CD4-positive, alpha-beta T cell (primary cell): ENCODE measurements at regions of chr7 and their contacts with region 1.

Region 1: GRCh38 chr7:82729172-82730030 is 285.8 kb upstream of the CACNA2D1 start:
- DNase-seq: peak in 4 of 14 experiments; percentile 4 to 20 (median 14)
- ATAC-seq: no peak
- H3K4me3 ChIP-seq: no peak overlapping the region
- H3K4me3 Mint-ChIP-seq: no peak overlapping the region
- H3K27ac ChIP-seq: no peak overlapping the region
- H3K27ac Mint-ChIP-seq: no peak overlapping the region
- H3K4me1 ChIP-seq: no peaks in the 10 kb centered on the region
- H3K4me1 Mint-ChIP-seq: no peaks in the 10 kb centered on the region
- H3K27me3 ChIP-seq: no peaks in the 10 kb centered on the region
- H3K27me3 Mint-ChIP-seq: no peaks in the 10 kb centered on the region
- CTCF ChIP-seq: peak; percentile 29

Region 2: DNA sequence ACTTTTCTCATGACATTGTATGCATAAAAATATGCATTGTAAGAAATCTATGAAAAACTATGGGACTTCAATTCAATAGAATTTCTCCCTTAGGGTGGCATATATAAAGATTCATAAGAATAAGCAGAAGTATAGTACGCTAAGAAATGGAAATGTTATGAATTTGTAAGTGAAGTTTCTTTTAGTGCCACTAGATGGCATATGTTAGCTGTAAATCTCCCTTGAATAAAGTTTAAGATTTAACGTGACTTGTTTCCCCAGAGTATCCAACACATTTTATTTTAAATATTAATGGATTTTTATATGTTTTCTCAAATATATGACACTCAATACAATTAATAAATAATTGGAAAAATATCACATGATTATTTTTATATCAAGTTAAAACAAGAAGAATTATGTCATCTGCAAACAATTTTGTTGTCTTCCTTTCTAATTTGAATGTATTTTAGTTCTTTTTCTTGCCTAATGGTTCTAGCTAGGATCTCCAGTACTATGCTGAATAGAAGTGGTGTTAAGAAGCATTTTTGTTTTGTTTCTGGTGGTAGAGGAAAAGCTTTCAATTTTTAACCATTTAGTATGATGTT is 1246.7 kb before region 1 on chr7:
- CTCF ChIA-PET with region 1: no interaction called
- POLR2A ChIA-PET with region 1: no interaction called
- intact Hi-C with region 1: loop called in 1 of 2 experiments (anchors 5 kb)
- DNase-seq: peak in 1 of 14 experiments; percentile 17
- ATAC-seq: no peak
- H3K4me3 ChIP-seq: no peak overlapping the region
- H3K4me3 Mint-ChIP-seq: no peak overlapping the region
- H3K27ac ChIP-seq: no peak overlapping the region
- H3K27ac Mint-ChIP-seq: no peak overlapping the region
- H3K4me1 ChIP-seq: no peaks in the 10 kb centered on the region
- H3K4me1 Mint-ChIP-seq: no peaks in the 10 kb centered on the region
- H3K27me3 ChIP-seq: no peaks in the 10 kb centered on the region
- H3K27me3 Mint-ChIP-seq: no peaks in the 10 kb centered on the region
- CTCF ChIP-seq: peak; percentile 73

Region 3: GRCh38 chr7:81499262-81500116 is 1229.9 kb before region 1 on chr7:
- CTCF ChIA-PET with region 1: no interaction called
- POLR2A ChIA-PET with region 1: no interaction called
- intact Hi-C with region 1: loop called in 1 of 2 experiments (anchors 5 kb)
- DNase-seq: peak in 2 of 14 experiments; percentile 24 to 29
- ATAC-seq: no peak
- H3K4me3 ChIP-seq: no peak overlapping the region
- H3K4me3 Mint-ChIP-seq: no peak overlapping the region
- H3K27ac ChIP-seq: no peak overlapping the region
- H3K27ac Mint-ChIP-seq: no peak overlapping the region
- H3K4me1 ChIP-seq: no peaks in the 10 kb centered on the region
- H3K4me1 Mint-ChIP-seq: no peaks in the 10 kb centered on the region
- H3K27me3 ChIP-seq: no peaks in the 10 kb centered on the region
- H3K27me3 Mint-ChIP-seq: no peaks in the 10 kb centered on the region
- CTCF ChIP-seq: no peak

Region 4: DNA sequence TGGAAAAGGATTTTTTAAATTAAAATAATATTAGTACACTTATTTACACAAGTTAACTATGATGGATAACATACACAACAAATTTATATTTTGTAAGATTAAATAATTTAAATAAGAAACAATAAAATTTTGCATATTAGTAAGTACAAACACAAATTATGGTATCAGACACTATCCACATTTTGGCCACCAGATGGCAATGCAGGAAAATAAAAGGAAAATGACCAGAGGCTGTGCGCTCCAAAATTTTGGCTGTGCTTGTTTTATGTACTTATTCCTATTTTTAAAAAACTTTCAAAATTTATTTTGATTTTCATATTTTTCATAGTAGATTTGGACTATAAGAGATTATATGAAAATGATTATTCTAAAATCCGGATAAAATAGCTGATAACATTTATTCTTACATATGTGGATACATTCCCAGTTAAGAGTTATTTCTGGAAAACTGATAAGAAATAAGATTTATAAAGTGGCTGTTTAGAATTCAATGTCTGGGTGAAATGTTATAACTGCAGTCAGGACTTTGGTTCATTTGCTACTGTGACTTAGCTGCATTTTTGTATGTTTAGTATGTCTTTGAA is 684.8 kb before region 1 on chr7:
- CTCF ChIA-PET with region 1: no interaction called
- POLR2A ChIA-PET with region 1: no interaction called
- intact Hi-C with region 1: loop called (anchors 5 to 10 kb)
- DNase-seq: peak in 3 of 14 experiments; percentile 5 to 11 (median 10)
- ATAC-seq: no peak
- H3K4me3 ChIP-seq: no peak overlapping the region
- H3K4me3 Mint-ChIP-seq: no peak overlapping the region
- H3K27ac ChIP-seq: no peak overlapping the region
- H3K27ac Mint-ChIP-seq: no peak overlapping the region
- H3K4me1 ChIP-seq: no peaks in the 10 kb centered on the region
- H3K4me1 Mint-ChIP-seq: no peaks in the 10 kb centered on the region
- H3K27me3 ChIP-seq: no peaks in the 10 kb centered on the region
- H3K27me3 Mint-ChIP-seq: no peaks in the 10 kb centered on the region
- CTCF ChIP-seq: no peak

Region 5: DNA sequence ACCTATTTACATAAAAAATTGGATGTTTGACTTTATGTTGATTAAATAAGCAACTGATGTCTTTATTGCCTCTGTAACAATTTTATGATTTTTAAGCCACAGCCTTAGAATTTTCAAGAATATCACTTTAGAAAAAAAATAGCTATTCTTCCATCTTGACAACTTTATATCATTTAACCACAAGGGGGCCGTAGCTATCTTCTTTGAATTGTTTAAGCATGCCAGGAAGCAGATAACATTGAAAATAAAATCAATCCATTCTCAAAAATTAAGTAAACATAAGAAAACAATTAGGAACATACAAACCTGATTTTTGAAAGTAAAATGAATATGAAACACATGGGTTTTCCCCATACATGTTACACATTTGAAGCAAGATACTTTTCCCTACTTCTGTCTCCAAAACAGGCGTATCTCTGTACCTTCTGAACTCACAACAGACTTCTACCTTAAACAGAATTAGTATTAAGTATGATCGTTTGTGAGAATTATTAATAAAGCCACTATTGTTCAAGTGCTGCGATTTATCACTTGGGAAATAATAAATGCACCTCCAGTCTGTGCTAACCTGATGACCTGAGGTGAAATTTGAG is 494.8 kb before region 1 on chr7:
- CTCF ChIA-PET with region 1: no interaction called
- POLR2A ChIA-PET with region 1: no interaction called
- intact Hi-C with region 1: loop called in 1 of 2 experiments (anchors 10 kb)
- DNase-seq: peak in 1 of 14 experiments; percentile 1
- ATAC-seq: no peak
- H3K4me3 ChIP-seq: no peak overlapping the region
- H3K4me3 Mint-ChIP-seq: no peak overlapping the region
- H3K27ac ChIP-seq: no peak overlapping the region
- H3K27ac Mint-ChIP-seq: no peak overlapping the region
- H3K4me1 ChIP-seq: no peaks in the 10 kb centered on the region
- H3K4me1 Mint-ChIP-seq: no peaks in the 10 kb centered on the region
- H3K27me3 ChIP-seq: no peaks in the 10 kb centered on the region
- H3K27me3 Mint-ChIP-seq: no peaks in the 10 kb centered on the region
- CTCF ChIP-seq: no peak

Region 6: GRCh38 chr7:82600531-82600930 is 128.9 kb before region 1 on chr7:
- CTCF ChIA-PET with region 1: no interaction called
- POLR2A ChIA-PET with region 1: no interaction called
- intact Hi-C with region 1: loop called (anchors 5 kb)
- DNase-seq: no peak
- ATAC-seq: no peak
- H3K4me3 ChIP-seq: no peak overlapping the region
- H3K4me3 Mint-ChIP-seq: no peak overlapping the region
- H3K27ac ChIP-seq: no peak overlapping the region
- H3K27ac Mint-ChIP-seq: no peak overlapping the region
- H3K4me1 ChIP-seq: no peaks in the 10 kb centered on the region
- H3K4me1 Mint-ChIP-seq: no peaks in the 10 kb centered on the region
- H3K27me3 ChIP-seq: no peaks in the 10 kb centered on the region
- H3K27me3 Mint-ChIP-seq: no peaks in the 10 kb centered on the region
- CTCF ChIP-seq: no peak